Activated B cell treated with CpG ODN at 0.5 μM for 24 hours (primary cell): ENCODE measurements at regions of chr6 and their contacts with region 1.

Region 1: DNA sequence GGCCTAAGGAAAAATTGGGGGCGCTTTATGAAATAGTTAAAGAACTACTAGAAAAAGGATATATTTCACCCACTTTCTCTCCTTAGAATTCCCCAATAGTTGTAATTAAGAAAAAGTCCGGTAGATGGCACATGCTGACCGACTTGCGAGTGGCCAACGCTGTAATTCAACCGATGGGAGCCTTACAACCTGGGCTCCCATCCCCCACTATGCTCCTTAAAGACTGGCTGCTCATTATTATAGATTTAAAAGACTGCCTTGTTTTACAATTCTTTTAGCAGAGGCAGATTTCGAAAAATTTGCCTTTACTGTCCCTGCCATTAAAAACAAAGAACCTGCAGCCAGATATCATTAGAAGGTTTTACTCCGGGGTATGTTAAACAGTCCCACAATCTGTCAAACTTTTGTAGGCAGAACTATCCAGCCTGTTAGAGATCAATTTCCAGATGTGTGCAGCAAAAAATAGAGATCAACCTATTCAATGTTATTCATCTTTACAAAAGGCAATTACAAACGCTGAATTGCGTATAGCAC is 58.5 kb upstream of the PRSS16 start:
- DNase-seq: no peak
- ATAC-seq: peak; percentile 80
- H3K4me3 Mint-ChIP-seq: peak overlapping the region; percentile 83
- H3K27ac Mint-ChIP-seq: peak overlapping the region; percentile 19
- H3K4me1 Mint-ChIP-seq: peaks cover 8% of the 10 kb centered on the region
- H3K27me3 Mint-ChIP-seq: peaks cover 2% of the 10 kb centered on the region
- CTCF ChIP-seq: no peak

Region 2: DNA sequence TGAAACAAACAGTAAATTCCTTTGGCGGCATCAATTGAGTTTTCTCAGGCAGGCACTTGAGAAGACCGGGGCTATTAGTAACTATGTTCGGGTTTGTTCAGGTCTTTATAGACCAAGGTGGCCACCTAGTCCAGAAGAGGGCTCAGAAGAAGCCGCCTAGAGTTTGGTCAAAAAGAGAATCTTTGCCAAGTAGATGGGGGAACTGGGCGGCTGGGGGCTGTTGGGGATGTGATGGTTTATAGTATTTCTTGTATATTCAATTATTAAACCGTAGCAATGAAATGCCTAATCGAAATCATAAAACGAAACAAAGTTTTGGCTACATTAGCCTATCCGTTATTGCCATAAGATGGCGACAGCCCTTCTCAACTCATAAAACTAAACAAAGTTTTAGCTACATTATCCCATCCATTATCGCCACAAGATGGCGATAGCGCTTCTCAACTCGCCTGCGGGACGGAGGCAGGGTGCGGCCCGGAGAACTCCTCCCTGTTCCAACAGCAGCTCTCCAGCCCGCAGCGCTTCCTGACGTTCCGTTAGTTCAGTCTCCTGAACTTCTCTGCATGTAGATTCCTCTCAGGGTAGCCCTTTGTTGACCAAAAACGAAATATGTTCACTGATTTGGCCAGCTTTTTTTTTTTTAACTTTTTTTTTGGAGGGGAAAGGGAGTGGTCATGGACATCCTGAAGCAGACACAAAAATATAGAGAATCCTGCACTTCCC is 62.0 kb before region 1 on chr6:
- CTCF ChIA-PET with region 1: no interaction called
- POLR2A ChIA-PET with region 1: no interaction called
- intact Hi-C with region 1: loop called (anchors 1 kb)
- DNase-seq: peak; percentile 55
- ATAC-seq: peak; percentile 79
- H3K4me3 Mint-ChIP-seq: peak overlapping the region; percentile 81
- H3K27ac Mint-ChIP-seq: peak overlapping the region; percentile 82
- H3K4me1 Mint-ChIP-seq: peaks cover 14% of the 10 kb centered on the region
- H3K27me3 Mint-ChIP-seq: no peaks in the 10 kb centered on the region
- CTCF ChIP-seq: peak; percentile 54

Region 3: DNA sequence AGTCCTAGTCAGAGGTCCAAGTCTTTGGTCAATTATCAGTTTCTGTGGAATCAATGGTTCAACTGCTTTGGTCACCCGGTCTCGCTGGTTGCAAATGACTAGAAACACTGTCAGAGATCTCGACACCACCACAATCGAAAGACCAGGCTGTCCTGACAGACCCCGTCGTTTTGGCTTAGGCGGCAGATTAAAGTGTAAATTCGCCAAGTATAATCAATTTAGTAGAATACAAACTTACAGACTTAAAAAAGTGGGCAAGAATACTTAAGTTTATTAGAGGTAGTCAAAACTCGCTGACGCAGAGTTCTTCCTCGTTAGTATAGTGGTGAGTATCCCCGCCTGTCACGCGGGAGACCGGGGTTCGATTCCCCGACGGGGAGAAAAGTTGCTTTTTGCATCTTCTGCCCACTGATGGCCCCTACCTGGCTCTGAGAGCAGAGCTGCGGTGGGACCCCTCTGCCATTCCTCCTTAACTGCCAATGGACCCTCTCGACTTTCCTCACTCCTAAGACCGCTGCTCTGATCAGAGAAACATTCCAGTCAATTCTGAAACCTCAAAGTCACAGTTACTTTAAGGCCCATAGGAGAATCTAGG is 314.6 kb after region 1 on chr6:
- CTCF ChIA-PET with region 1: no interaction called
- POLR2A ChIA-PET with region 1: no interaction called
- intact Hi-C with region 1: loop called (anchors 1 kb)
- DNase-seq: peak; percentile 61
- ATAC-seq: peak; percentile 39
- H3K4me3 Mint-ChIP-seq: peak overlapping the region; percentile 87
- H3K27ac Mint-ChIP-seq: peak overlapping the region; percentile 77
- H3K4me1 Mint-ChIP-seq: peaks cover 35% of the 10 kb centered on the region
- H3K27me3 Mint-ChIP-seq: peaks cover 12% of the 10 kb centered on the region
- CTCF ChIP-seq: no peak

Region 4: GRCh38 chr6:27772261-27773001 is 583.5 kb after region 1 on chr6:
- CTCF ChIA-PET with region 1: interaction called, 5 read pairs
- POLR2A ChIA-PET with region 1: interaction called, 4 read pairs
- intact Hi-C with region 1: loop called (anchors 1 kb)
- DNase-seq: peak; percentile 74
- ATAC-seq: peak; percentile 92
- H3K4me3 Mint-ChIP-seq: peak overlapping the region; percentile 57
- H3K27ac Mint-ChIP-seq: peak overlapping the region; percentile 66
- H3K4me1 Mint-ChIP-seq: peaks cover 38% of the 10 kb centered on the region
- H3K27me3 Mint-ChIP-seq: peaks cover 5% of the 10 kb centered on the region
- CTCF ChIP-seq: peak; percentile 66

Region 5: GRCh38 chr6:28355743-28356665 is 1167.1 kb after region 1 on chr6:
- CTCF ChIA-PET with region 1: no interaction called
- POLR2A ChIA-PET with region 1: no interaction called
- intact Hi-C with region 1: loop called (anchors 2 kb)
- DNase-seq: peak; percentile 41
- ATAC-seq: peak; percentile 85
- H3K4me3 Mint-ChIP-seq: peak overlapping the region; percentile 91
- H3K27ac Mint-ChIP-seq: peak overlapping the region; percentile 71
- H3K4me1 Mint-ChIP-seq: peaks cover 21% of the 10 kb centered on the region
- H3K27me3 Mint-ChIP-seq: no peaks in the 10 kb centered on the region
- CTCF ChIP-seq: peak; percentile 82

Region 6: GRCh38 chr6:29016559-29017427 is 1827.8 kb after region 1 on chr6:
- CTCF ChIA-PET with region 1: no interaction called
- POLR2A ChIA-PET with region 1: no interaction called
- intact Hi-C with region 1: loop called (anchors 2 kb)
- DNase-seq: peak; percentile 63
- ATAC-seq: peak; percentile 85
- H3K4me3 Mint-ChIP-seq: peak overlapping the region; percentile 80
- H3K27ac Mint-ChIP-seq: peak overlapping the region; percentile 41
- H3K4me1 Mint-ChIP-seq: peaks cover 17% of the 10 kb centered on the region
- H3K27me3 Mint-ChIP-seq: peaks cover 31% of the 10 kb centered on the region
- CTCF ChIP-seq: peak; percentile 92